ENCODE measurements at regions of chr6 and their contacts with region 1.

Region 1: DNA sequence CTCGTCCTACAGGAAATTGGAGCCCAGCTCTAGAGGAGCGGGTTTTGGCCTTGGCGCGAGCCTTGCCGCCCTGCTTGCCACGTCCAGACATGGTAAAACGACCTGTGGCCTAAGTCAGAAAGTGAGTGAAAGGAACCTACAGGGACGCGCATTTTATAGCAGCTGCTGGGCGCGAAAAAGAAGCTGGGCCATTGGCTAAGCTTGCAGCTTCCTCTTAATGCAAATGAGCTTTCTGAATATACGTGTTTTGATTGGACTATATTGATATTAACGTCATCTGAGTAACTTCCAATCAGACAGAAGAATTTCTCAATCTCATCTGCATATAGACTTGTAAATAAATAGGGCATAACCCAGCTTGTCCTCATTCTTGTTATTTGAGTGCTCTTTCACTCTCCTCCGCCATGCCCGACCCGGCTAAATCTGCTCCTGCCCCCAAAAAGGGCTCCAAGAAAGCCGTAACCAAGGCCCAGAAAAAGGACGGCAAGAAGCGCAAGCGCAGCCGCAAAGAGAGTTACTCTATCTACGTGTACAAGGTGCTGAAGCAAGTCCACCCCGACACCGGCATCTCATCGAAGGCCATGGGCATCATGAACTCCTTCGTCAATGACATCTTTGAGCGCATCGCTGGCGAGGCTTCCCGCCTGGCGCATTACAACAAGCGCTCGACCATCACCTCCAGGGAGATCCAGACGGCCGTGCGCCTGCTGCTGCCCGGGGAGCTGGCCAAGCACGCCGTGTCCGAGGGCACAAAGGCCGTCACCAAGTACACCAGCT is 18.9 kb downstream of the OR2B2 start:
- DNase-seq: peak; percentile 91
- ATAC-seq: peak; percentile 46
- H3K4me3 Mint-ChIP-seq: no peak overlapping the region
- H3K27ac Mint-ChIP-seq: peak overlapping the region; percentile 99
- H3K4me1 Mint-ChIP-seq: peaks cover 42% of the 10 kb centered on the region
- H3K27me3 Mint-ChIP-seq: no peaks in the 10 kb centered on the region; the same call in 1 of the 2 replicates
- CTCF ChIP-seq: no peak

Region 2: DNA sequence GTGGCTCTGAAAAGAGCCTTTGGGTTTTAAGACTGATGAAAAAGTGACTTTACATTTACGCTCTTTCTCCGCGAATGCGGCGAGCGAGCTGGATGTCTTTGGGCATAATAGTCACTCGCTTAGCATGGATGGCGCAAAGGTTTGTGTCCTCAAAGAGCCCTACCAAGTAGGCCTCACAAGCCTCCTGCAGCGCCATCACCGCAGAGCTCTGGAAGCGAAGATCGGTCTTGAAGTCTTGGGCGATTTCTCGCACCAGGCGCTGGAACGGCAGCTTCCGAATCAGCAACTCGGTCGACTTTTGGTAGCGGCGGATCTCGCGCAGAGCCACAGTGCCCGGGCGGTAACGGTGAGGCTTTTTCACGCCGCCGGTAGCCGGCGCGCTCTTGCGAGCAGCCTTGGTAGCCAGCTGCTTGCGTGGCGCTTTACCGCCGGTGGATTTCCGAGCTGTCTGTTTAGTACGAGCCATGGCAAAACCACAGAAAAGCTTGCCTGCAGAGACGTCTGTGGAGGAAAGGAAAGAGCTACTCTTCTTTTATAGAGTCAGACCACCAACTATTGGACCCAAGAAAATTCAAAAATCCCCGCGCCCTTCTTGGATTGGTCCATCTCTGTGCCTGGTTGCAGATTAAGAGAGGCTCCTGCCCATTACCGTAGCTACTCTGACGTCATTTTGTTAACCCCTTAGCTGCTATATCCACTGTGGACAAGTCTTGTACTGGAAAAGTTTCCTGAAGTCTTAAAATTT is 1861.5 kb before region 1 on chr6:
- CTCF ChIA-PET with region 1: no interaction called
- POLR2A ChIA-PET with region 1: interaction called, 25 read pairs
- DNase-seq: peak; percentile 80
- ATAC-seq: peak; percentile 67
- H3K4me3 Mint-ChIP-seq: peak overlapping the region; percentile 91
- H3K27ac Mint-ChIP-seq: peak overlapping the region; percentile 100
- H3K4me1 Mint-ChIP-seq: peaks cover 59% of the 10 kb centered on the region
- H3K27me3 Mint-ChIP-seq: no peaks in the 10 kb centered on the region
- CTCF ChIP-seq: no peak

Region 3: GRCh38 chr6:26249957-26250697 is 1643.1 kb before region 1 on chr6:
- CTCF ChIA-PET with region 1: no interaction called
- POLR2A ChIA-PET with region 1: interaction called, 18 read pairs
- DNase-seq: peak; percentile 74
- ATAC-seq: peak; percentile 53
- H3K4me3 Mint-ChIP-seq: peak overlapping the region; percentile 96
- H3K27ac Mint-ChIP-seq: peak overlapping the region; percentile 98
- H3K4me1 Mint-ChIP-seq: peaks cover 27% of the 10 kb centered on the region
- H3K27me3 Mint-ChIP-seq: no peaks in the 10 kb centered on the region
- CTCF ChIP-seq: no peak

Region 4: DNA sequence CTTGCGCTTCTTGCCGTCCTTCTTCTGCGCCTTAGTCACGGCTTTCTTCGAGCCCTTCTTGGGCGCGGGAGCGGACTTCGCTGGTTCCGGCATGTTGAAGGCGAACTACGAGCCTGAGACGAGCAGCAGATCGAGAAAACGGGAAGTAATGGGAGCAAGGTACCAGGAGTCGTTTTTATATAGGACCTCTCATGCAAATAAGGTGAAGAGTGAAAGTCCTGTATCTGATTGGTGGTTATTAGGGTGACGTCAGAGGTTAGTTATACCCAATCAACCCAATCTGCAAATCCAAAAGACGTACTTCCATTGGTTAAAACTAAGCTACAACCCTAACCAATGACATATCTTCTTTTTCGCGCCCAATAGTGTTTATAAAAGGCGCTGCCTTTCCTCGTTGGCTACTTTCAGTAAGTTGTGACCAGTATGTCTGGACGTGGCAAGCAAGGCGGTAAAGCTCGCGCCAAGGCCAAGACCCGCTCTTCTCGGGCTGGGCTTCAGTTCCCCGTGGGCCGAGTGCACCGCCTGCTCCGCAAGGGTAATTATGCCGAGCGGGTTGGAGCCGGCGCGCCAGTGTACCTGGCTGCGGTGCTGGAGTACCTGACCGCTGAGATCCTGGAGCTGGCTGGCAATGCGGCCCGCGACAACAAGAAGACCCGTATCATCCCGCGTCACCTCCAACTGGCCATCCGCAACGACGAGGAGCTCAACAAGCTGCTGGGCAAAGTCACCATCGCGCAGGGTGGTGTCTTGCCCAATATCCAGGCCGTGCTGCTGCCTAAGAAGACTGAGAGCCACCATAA is 746.3 kb before region 1 on chr6:
- CTCF ChIA-PET with region 1: no interaction called
- POLR2A ChIA-PET with region 1: interaction called, 79 read pairs
- DNase-seq: peak; percentile 80
- ATAC-seq: peak; percentile 67
- H3K4me3 Mint-ChIP-seq: no peak overlapping the region
- H3K27ac Mint-ChIP-seq: no peak overlapping the region
- H3K4me1 Mint-ChIP-seq: peaks cover 23% of the 10 kb centered on the region
- H3K27me3 Mint-ChIP-seq: no peaks in the 10 kb centered on the region
- CTCF ChIP-seq: no peak

Region 5: GRCh38 chr6:27864906-27865849 is 28.1 kb before region 1 on chr6:
- CTCF ChIA-PET with region 1: interaction called, 17 read pairs
- POLR2A ChIA-PET with region 1: interaction called, 817 read pairs
- DNase-seq: peak; percentile 73
- ATAC-seq: peak; percentile 51
- H3K4me3 Mint-ChIP-seq: peak overlapping the region; percentile 97
- H3K27ac Mint-ChIP-seq: peak overlapping the region; percentile 100
- H3K4me1 Mint-ChIP-seq: peaks cover 25% of the 10 kb centered on the region
- H3K27me3 Mint-ChIP-seq: peaks cover 4% of the 10 kb centered on the region; the same call in 1 of the 2 replicates
- CTCF ChIP-seq: no peak

Region 6: GRCh38 chr6:27994616-27995015 is 101.4 kb after region 1 on chr6:
- CTCF ChIA-PET with region 1: no interaction called
- POLR2A ChIA-PET with region 1: no interaction called
- DNase-seq: no peak
- ATAC-seq: no peak
- H3K4me3 Mint-ChIP-seq: no peak overlapping the region
- H3K27ac Mint-ChIP-seq: no peak overlapping the region
- H3K4me1 Mint-ChIP-seq: no peaks in the 10 kb centered on the region
- H3K27me3 Mint-ChIP-seq: peaks cover 23% of the 10 kb centered on the region
- CTCF ChIP-seq: no peak

Region 7: GRCh38 chr6:28068067-28068466 is 174.8 kb after region 1 on chr6:
- CTCF ChIA-PET with region 1: no interaction called
- POLR2A ChIA-PET with region 1: no interaction called
- DNase-seq: no peak
- ATAC-seq: no peak
- H3K4me3 Mint-ChIP-seq: no peak overlapping the region
- H3K27ac Mint-ChIP-seq: no peak overlapping the region
- H3K4me1 Mint-ChIP-seq: no peaks in the 10 kb centered on the region
- H3K27me3 Mint-ChIP-seq: peaks cover 41% of the 10 kb centered on the region
- CTCF ChIP-seq: no peak

Region 8: DNA sequence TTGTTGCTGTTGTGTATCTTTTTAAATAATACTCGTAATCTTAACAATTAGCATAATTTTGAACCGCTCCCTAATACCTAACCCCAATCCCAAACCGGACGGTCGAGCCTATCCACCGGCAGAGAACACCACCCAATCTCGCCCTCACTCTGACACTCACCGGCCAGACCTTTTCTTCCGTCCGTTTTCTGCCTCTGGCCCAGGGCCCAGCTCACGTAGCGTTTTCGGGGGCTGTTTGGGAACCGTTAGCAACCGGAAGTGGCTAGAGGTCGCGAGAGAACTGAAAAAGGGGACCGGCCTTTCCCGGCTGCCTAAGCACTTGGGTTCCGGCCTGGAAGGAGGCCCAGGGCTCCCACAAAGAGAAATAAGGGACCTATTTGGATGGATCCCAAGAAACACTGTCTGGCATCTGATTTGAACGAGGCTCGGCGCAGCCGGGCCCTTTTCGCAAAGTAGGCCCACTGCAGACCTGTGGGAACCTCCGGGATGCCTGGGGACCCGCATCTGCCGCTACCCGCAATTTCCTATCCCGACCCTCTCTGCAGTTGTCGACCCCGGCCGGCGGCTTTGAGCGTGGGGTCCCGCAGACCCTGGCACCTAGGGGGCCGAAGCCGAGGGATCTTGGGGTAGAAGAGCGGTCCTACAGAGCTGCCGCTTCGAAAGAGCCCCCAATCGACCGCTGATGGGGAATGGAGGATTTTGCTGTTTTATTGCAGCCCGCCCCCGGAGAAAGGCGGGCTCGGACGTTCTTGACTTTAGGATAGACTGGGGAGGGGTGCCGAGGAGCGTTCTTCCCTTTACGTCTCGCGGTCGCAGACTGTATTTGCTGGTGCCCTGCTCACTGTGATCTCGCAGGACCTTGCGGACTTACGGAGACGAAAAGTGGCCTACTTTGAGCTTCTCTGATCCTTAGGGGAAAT is 243.6 kb after region 1 on chr6:
- CTCF ChIA-PET with region 1: no interaction called
- POLR2A ChIA-PET with region 1: interaction called, 12 read pairs
- DNase-seq: peak; percentile 86
- ATAC-seq: peak; percentile 75
- H3K4me3 Mint-ChIP-seq: peak overlapping the region; percentile 95
- H3K27ac Mint-ChIP-seq: peak overlapping the region; percentile 92
- H3K4me1 Mint-ChIP-seq: peaks cover 21% of the 10 kb centered on the region
- H3K27me3 Mint-ChIP-seq: peaks cover 34% of the 10 kb centered on the region
- CTCF ChIP-seq: no peak